ENCODE measurements at regions of chr6 and their contacts with region 1.

Region 1: DNA sequence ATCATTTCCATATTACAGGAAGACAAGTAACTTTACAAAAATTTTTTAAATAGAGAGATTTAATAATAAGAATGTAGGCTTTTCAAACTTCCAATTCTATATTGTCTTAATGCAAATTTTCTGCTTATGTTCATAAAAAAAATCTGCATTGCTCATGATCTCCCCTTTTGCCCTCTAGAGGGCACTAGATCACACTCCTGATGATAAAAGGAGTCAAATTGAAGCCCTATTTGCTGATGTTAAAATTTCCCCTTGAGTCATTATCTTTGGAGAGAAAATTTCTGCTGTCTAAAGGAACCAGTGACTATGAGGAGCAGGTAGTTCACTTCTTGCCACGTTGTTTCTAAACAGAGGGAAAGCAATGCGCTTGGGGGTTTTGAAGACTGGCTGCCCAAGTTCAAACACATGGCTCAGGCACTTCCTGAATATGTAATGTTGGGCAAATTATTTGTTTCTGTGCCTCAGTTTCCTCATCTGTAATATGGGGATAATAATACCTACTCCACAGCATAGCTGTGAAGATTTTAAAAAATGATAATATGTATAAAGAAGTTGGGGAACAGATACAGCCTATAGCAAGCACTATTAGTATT is 874.2 kb downstream of the TFAP2A start:
- DNase-seq: peak; percentile 47
- ATAC-seq: peak; percentile 67; the same call in 1 of the 2 replicates
- H3K4me3 ChIP-seq: no peak overlapping the region
- H3K27ac ChIP-seq: no peak overlapping the region
- H3K4me1 ChIP-seq: 0 out of 4 replicates have a peak, but pooled peaks cover 0 to 6% of the 10 kb centered on the region in 2 experiments
- H3K27me3 ChIP-seq: no peaks in the 10 kb centered on the region
- CTCF ChIP-seq: peak; percentile 47 to 81 (median 65); a peak in 4 of 6 replicates
- POLR2A ChIP-seq: no peak
- RAD21 ChIP-seq: peak; percentile 64

Region 2: DNA sequence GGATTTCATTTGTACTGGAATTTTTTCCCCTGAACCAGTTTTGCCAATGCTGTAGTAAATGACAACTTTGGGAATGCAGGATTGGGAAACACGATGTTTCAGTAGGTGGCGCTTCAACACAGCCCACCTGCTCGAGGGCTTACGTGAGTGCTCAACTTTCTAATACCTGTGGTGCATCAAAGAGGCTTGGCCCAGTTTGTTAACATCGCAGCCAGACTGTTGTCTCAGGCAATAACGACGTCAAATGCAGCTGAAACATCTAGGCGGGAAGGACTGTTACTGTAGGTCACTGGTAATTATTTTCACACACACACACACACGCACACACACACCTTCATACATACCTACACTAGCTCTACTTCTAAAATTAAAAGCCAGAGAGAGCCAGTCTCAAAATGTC is 289.8 kb before region 1 on chr6:
- CTCF ChIA-PET with region 1: no interaction called
- POLR2A ChIA-PET with region 1: no interaction called
- RAD21 ChIA-PET with region 1: no interaction called
- intact Hi-C with region 1: loop called (anchors 5 kb)
- DNase-seq: peak; percentile 63
- ATAC-seq: peak; percentile 97
- H3K4me3 ChIP-seq: no peak overlapping the region
- H3K27ac ChIP-seq: no peak overlapping the region
- H3K4me1 ChIP-seq: no peaks in the 10 kb centered on the region
- H3K27me3 ChIP-seq: no peaks in the 10 kb centered on the region
- CTCF ChIP-seq: peak; percentile 71 to 78 (median 73)
- POLR2A ChIP-seq: no peak
- RAD21 ChIP-seq: peak; percentile 94